SK-N-SH (cell line): ENCODE measurements at regions of chr7 and their contacts with region 1.

Region 1: DNA sequence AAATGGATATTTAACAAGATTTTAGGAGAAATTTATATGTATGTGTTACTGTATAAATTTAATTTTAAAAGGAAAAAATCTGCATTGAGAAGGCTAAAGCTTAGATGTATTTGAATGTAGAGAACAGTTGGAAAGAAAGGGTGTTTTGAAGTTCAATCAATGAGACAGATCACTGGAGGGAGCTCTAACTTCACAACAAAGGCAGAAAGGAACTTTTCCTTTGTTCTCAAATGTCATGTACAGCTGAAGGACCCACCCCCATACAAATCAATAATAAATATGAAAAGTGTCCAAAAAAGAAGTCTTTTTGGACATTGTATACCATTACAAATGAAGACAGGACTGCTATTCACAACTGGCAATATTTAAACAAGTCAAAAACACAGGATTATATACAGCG is 403.4 kb downstream of the DNAJB9 start:
- DNase-seq: peak; percentile 41
- H3K4me3 ChIP-seq: no peak overlapping the region
- H3K27ac ChIP-seq: no peak overlapping the region
- H3K4me1 ChIP-seq: no peaks in the 10 kb centered on the region; a peak in 1 of 4 replicates
- H3K27me3 ChIP-seq: no peaks in the 10 kb centered on the region
- CTCF ChIP-seq: no peak
- EP300 ChIP-seq: no peak
- RAD21 ChIP-seq: peak; percentile 90

Region 2: GRCh38 chr7:108985037-108985436 is 12.0 kb after region 1 on chr7:
- CTCF ChIA-PET with region 1: interaction called, 16 read pairs
- POLR2A ChIA-PET with region 1: no interaction called
- DNase-seq: no peak
- H3K4me3 ChIP-seq: no peak overlapping the region
- H3K27ac ChIP-seq: no peak overlapping the region
- H3K4me1 ChIP-seq: no peaks in the 10 kb centered on the region
- H3K27me3 ChIP-seq: no peaks in the 10 kb centered on the region
- CTCF ChIP-seq: no peak
- EP300 ChIP-seq: no peak
- RAD21 ChIP-seq: no peak

Region 3: DNA sequence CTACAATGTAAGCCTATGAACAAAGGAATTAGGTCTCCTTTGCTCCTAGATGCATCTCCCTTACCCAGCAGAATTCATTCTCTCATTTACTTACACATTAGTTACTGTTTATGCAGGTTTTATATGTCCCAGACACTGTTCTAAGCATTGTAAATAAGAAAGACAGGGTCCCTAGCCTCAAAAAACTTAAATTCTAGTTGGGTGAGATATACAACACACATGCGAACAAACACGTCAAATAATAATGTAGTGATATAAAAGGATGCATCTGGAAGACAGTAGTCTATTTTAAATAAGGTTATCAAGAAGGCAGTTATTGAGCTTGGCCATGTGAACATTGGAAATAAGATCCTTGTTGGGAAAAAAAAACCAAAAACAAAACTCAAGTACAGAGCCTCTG is 76.3 kb after region 1 on chr7:
- CTCF ChIA-PET with region 1: no interaction called
- POLR2A ChIA-PET with region 1: no interaction called
- DNase-seq: no peak
- H3K4me3 ChIP-seq: no peak overlapping the region
- H3K27ac ChIP-seq: no peak overlapping the region
- H3K4me1 ChIP-seq: no peaks in the 10 kb centered on the region
- H3K27me3 ChIP-seq: no peaks in the 10 kb centered on the region
- CTCF ChIP-seq: no peak
- EP300 ChIP-seq: no peak
- RAD21 ChIP-seq: no peak

Region 4: DNA sequence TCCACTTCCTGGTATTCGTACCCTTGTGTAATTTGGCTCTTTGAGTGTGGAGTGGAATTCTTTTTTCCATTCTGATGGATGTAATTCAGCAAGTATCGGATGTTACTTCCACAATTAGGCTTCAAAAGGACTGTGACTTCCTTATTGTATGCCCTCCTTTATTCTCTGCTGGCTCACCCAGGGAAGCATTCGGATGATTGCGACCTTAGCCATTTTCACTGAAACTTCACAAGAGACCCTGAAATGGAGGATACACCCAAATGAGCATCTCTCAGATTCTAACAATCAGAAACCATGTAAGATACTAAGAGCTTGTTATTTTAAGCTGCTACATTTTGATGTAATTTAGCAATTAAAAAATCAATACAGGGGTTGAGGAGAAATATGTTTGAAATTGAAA is 89.7 kb after region 1 on chr7:
- CTCF ChIA-PET with region 1: no interaction called
- POLR2A ChIA-PET with region 1: no interaction called
- DNase-seq: no peak
- H3K4me3 ChIP-seq: no peak overlapping the region
- H3K27ac ChIP-seq: no peak overlapping the region
- H3K4me1 ChIP-seq: no peaks in the 10 kb centered on the region
- H3K27me3 ChIP-seq: no peaks in the 10 kb centered on the region
- CTCF ChIP-seq: no peak
- EP300 ChIP-seq: no peak
- RAD21 ChIP-seq: no peak